GM12878 (cell line): ENCODE measurements at regions of chr3 and their contacts with region 1.

Region 1: DNA sequence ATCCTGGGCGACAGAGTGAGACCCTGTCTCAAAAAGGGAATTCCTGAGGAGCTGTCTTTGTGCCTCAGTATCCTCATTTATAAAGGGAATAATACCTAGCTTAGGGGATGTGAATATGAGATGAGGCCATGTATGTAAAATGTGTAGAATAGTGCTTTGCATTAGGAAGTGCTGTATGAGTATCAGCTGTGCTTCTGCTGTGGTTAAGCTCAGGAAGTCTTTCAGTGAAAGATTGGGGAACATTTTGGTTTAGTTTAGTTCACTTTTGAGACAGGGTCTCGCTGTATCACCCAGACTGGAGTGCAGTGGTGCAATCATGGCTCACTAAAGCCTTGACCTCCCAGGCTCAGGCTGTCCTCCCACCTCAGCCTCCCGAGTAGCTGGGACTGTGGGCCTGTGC is 10.6 kb downstream of the THUMPD3 start:
- DNase-seq: no peak
- ATAC-seq: peak; percentile 50
- H3K4me3 ChIP-seq: no peak overlapping the region
- H3K27ac ChIP-seq: no peak overlapping the region
- H3K4me1 ChIP-seq: peaks cover 4% of the 10 kb centered on the region; the same call in 1 of the 2 replicates
- H3K27me3 ChIP-seq: no peaks in the 10 kb centered on the region
- CTCF ChIP-seq: no peak
- EP300 ChIP-seq: no peak
- POLR2A ChIP-seq: no peak
- RAD21 ChIP-seq: no peak

Region 2: DNA sequence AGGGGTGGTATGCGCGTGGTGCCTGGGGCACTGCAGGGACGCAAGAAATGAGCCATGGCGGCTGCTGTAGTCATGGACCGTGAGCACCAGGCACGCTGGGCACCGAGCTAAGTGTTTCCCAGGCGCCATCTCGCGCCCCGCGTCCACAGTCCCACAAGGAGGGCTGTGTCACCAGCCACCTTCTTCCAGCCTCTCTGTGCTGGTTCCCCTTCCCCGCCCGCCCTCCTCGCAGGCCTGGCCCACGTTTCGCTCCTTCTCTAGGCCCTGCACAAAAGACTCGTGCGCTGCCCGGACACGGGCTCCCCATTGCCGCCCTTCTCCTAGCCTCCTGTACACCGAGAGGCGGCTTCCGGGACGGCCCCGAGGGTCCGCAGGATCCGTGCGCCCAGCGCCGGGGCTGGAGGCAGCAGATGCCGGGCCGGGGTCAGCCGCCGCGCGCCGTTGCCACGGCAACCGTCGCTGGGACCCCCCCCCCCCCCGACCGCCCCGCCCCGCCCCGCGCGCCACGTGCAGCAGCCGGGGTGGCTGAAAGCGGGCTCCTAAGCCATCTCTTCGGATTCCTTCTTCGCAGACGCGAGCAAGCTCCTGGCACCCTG is 237.4 kb before region 1 on chr3:
- CTCF ChIA-PET with region 1: no interaction called
- POLR2A ChIA-PET with region 1: no interaction called
- RAD21 ChIA-PET with region 1: no interaction called
- SMC1A ChIA-PET with region 1: no interaction called
- in situ Hi-C with region 1: no loop called
- intact Hi-C with region 1: no loop called
- DNase-seq: no peak
- ATAC-seq: no peak
- H3K4me3 ChIP-seq: no peak overlapping the region
- H3K27ac ChIP-seq: no peak overlapping the region
- H3K4me1 ChIP-seq: no peaks in the 10 kb centered on the region
- H3K27me3 ChIP-seq: peaks cover 0 to 7% of the 10 kb centered on the region in 2 experiments; a peak in 2 of 4 replicates
- CTCF ChIP-seq: no peak
- EP300 ChIP-seq: no peak
- POLR2A ChIP-seq: no peak
- RAD21 ChIP-seq: no peak

Region 3: DNA sequence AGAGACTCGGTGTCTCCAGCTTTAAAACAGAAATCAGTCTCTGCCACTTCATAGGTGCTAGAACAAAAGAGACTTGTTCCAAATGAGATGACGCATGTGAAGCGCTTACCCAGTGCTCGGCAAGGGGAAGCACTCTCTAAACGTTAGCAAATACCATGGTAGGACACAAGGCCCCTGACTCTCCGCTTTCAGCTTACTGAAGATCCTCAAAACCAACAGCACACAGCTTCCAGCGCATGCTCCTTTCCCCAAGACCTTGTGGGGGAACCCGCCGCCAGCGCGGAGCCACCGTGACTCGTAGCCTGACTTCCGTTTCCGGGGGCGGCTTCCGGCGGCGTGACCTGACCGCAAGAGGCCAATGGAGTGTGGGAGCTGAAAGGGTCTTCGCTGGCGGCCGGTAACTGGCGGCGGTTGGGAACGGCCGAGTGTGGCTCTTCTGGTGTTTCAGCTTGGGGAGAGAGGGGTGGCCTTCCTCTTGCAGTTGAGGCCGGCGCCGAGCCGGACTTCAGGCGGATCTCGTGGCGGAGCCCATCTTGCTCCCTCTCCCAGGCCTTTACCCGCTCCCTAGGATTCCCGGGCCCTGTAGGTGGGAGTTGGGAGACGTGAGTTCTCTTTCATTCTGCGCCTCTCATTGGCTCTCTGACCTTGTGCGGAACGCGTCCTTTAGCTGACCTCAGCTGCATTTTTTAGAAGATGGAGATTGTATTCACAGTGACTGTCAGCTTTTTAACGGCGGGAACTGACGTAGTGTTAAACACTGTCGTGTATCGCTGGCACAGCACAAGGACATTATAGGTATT is 10.5 kb before region 1 on chr3 and contains the start of gene THUMPD3:
- CTCF ChIA-PET with region 1: interaction called, 11 read pairs
- POLR2A ChIA-PET with region 1: interaction called, 6 read pairs
- RAD21 ChIA-PET with region 1: no interaction called
- SMC1A ChIA-PET with region 1: interaction called, 16 read pairs
- in situ Hi-C with region 1: no loop called
- intact Hi-C with region 1: no loop called
- DNase-seq: peak; percentile 66
- ATAC-seq: peak; percentile 98
- H3K4me3 ChIP-seq: peak within 1 kb of the TSS; percentile 84
- H3K27ac ChIP-seq: peak within 1 kb of the TSS; percentile 95
- H3K4me1 ChIP-seq: no peaks in the 10 kb centered on the region; the same call in none of the 2 replicates
- H3K27me3 ChIP-seq: no peaks in the 10 kb centered on the region
- CTCF ChIP-seq: no peak
- EP300 ChIP-seq: peak in 1 of 2 experiments; percentile 50; a peak in 2 of 4 replicates
- POLR2A ChIP-seq: peak; percentile 95
- RAD21 ChIP-seq: no peak
- polyA plus RNA-seq, gene THUMPD3: 29.2 to 32.1 TPM